ENCODE measurements at regions of chr12 and their contacts with region 1.

Region 1: GRCh38 chr12:12376646-12377448 is 20.0 kb downstream of the BORCS5 start:
- DNase-seq: peak in 2 of 5 donors; percentile 87 to 93
- H3K4me3 ChIP-seq: no peak overlapping the region
- H3K27ac ChIP-seq: no peak overlapping the region
- H3K4me1 ChIP-seq: peaks cover 0 to 3% (median 0%) of the 10 kb centered on the region in 3 donors
- H3K27me3 ChIP-seq: no peaks in the 10 kb centered on the region
- CTCF ChIP-seq: peak; percentile 82

Region 2: DNA sequence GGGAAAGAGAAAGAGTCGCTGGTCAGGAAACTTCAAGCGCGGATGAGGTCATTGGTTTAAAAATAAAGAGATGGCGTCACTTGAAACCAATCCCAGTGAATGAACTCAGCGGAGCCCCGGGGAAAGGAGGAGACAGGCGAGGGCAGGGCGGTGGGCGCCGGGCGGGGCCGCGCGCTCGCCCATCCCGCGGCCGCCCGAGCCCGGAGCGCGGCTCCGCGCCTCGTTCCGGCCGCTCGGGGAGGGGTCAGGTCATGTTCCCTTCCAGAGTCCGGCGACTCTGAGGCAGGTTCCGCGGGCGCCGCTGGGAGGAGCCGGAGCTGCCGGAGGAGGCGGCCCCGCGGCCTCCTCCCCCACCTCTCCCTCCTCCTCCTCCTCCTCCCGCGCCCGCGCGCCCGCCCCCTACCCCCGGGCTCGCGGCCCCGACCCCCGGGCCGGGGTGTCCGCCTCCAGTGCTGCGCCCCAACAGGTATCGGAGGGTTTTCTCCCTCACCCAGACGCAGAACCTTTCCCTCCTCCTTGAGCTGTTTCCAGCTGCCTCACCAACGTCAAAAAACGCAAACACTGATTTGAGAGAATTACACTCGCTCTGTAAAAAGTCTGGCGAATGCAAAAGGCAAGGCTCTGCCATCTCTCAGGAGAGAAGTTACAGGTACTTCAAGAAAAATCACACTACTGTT is 185.9 kb after region 1 on chr12 and contains the start of gene DUSP16:
- intact Hi-C with region 1: loop called (anchors 10 kb)
- DNase-seq: peak; percentile 94 to 98 (median 97)
- H3K4me3 ChIP-seq: peak within 1 kb of the TSS; percentile 80 to 85 (median 80)
- H3K27ac ChIP-seq: peak within 1 kb of the TSS; percentile 96 to 97
- H3K4me1 ChIP-seq: peaks cover 0 to 21% (median 0%) of the 10 kb centered on the region in 3 donors
- H3K27me3 ChIP-seq: no peaks in the 10 kb centered on the region
- CTCF ChIP-seq: no peak
- total RNA-seq, gene DUSP16: 27.4 TPM

Region 3: GRCh38 chr12:12654691-12655460 is 278.0 kb after region 1 on chr12:
- intact Hi-C with region 1: loop called (anchors 10 kb)
- DNase-seq: peak in 2 of 5 donors; percentile 53 to 55
- H3K4me3 ChIP-seq: no peak overlapping the region
- H3K27ac ChIP-seq: no peak overlapping the region
- H3K4me1 ChIP-seq: no peaks in the 10 kb centered on the region
- H3K27me3 ChIP-seq: no peaks in the 10 kb centered on the region
- CTCF ChIP-seq: no peak

Region 4: DNA sequence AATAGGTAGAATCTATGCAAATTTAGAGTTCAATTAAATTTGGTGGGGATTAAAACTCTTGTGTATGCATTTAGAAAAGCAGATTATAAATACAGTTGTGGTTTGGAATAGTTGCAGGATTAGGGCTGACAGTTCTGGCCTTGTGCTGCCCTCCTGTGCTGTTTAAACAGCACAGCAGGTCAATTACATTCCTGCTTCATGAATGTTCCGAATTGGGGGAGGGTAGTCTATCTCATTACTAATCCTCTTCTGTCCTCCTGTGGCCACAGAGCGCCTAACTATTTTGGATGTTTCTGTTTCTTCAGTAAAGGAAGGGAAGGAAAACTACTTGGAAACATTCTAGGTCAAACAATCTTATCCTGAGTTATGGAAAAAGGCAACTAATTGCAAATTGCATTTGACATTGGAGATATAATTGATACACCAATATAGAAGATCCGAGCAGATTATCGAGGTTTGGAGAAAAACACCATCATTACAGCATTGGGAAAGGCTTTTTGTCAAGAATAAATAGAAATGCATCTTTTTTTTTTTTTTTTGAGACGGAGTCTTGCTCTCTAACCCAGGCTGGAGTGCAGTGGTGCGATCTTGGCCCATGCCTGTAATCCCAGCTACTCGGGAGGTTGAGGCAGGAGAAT is 327.9 kb after region 1 on chr12:
- intact Hi-C with region 1: loop called (anchors 10 kb)
- DNase-seq: peak in 4 of 5 donors; percentile 67 to 95 (median 82)
- H3K4me3 ChIP-seq: no peak overlapping the region
- H3K27ac ChIP-seq: no peak overlapping the region
- H3K4me1 ChIP-seq: peaks cover 0 to 9% (median 4%) of the 10 kb centered on the region in 3 donors
- H3K27me3 ChIP-seq: no peaks in the 10 kb centered on the region
- CTCF ChIP-seq: peak; percentile 90

Measured in kidney (tissue), 22 donors.